ENCODE measurements at regions of chr10 and their contacts with region 1.

Region 1: DNA sequence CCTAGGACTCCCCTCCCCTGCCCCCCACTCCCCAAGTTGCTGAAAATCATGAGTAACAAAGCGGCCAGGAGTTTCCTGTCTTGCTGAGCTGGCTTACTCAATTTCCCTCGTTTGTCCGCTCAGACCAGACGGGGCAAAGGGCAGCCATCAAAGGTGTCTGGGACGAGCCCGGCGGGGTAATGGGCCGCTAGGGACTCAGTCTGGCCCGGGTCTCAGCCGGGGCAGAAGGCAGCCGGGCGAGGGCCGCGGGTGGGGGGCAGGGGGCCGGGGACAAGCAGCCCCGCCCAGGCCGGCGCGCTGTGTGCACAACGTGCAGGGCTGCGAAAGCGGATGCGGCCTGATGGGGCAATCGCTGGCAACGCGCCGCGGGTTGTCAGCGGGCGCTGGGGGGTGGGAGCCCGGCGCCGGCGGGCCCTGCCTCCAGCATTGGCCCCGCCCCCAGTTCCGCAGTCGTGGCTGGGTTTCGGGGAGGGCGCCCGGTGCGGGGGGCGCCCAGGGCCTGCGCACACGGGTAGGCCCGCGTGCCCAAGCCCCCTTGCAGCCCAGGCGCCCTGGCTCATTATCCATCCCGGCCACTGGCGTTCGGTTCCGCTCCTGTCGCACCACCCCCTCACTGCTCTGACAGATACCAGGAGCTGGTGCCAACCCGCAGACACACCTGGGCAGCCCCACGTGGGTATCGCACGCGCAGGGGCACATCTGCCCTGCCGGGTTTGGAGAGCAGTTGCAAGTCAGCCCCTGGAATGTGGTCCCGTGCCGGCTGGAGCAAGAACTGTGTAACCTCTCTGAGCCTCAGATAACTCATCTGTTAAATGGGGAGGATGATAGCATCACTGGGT is 35.1 kb downstream of the DNAJB12 start:
- DNase-seq: peak; percentile 90 to 96
- ATAC-seq: peak; percentile 64 to 92 (median 80)
- H3K4me3 ChIP-seq: peak overlapping the region in 9 of 10 donors; percentile 25 to 57 (median 50)
- H3K27ac ChIP-seq: peak overlapping the region; percentile 72 to 99 (median 90)
- H3K4me1 ChIP-seq: peaks cover 42 to 98% (median 73%) of the 10 kb centered on the region in 9 donors
- H3K27me3 ChIP-seq: no peaks in the 10 kb centered on the region
- CTCF ChIP-seq: peak in 1 of 9 donors; percentile 9

Region 2: GRCh38 chr10:72248468-72249151 is 71.0 kb before region 1 on chr10:
- intact Hi-C with region 1: loop called in 1 of 10 experiments (anchors 2 kb)
- DNase-seq: peak; percentile 81 to 87
- ATAC-seq: peak; percentile 83 to 91 (median 89)
- H3K4me3 ChIP-seq: peak overlapping the region in 6 of 10 donors; percentile 4 to 31 (median 22)
- H3K27ac ChIP-seq: peak overlapping the region; percentile 78 to 94 (median 88)
- H3K4me1 ChIP-seq: peaks cover 47 to 100% (median 90%) of the 10 kb centered on the region in 9 donors
- H3K27me3 ChIP-seq: no peaks in the 10 kb centered on the region
- CTCF ChIP-seq: no peak

Region 3: GRCh38 chr10:72254813-72255568 is 64.6 kb before region 1 on chr10:
- intact Hi-C with region 1: loop called in 1 of 10 experiments (anchors 5 kb)
- DNase-seq: peak; percentile 87 to 90
- ATAC-seq: peak; percentile 85 to 94 (median 91)
- H3K4me3 ChIP-seq: peak overlapping the region in 7 of 10 donors; percentile 1 to 28 (median 20)
- H3K27ac ChIP-seq: peak overlapping the region; percentile 84 to 97 (median 90)
- H3K4me1 ChIP-seq: peaks cover 41 to 97% (median 87%) of the 10 kb centered on the region in 9 donors
- H3K27me3 ChIP-seq: no peaks in the 10 kb centered on the region
- CTCF ChIP-seq: peak in 2 of 9 donors; percentile 14 to 36

Measured in heart right ventricle (tissue), 16 donors.